Endothelial cell of umbilical vein (primary cell): ENCODE measurements at regions of chr2 and their contacts with region 1.

Region 1: GRCh38 chr2:100730346-100730745 is 89.6 kb upstream of the NPAS2 start:
- DNase-seq: peak; percentile 88
- H3K4me3 ChIP-seq: no peak overlapping the region
- H3K27ac ChIP-seq: no peak overlapping the region
- H3K4me1 ChIP-seq: no peaks in the 10 kb centered on the region
- H3K27me3 ChIP-seq: peaks cover 0 to 2% of the 10 kb centered on the region in 2 experiments
- CTCF ChIP-seq: peak; percentile 68 to 71
- POLR2A ChIP-seq: no peak

Region 2: GRCh38 chr2:100309973-100310719 is 420.2 kb before region 1 on chr2:
- CTCF ChIA-PET with region 1: no interaction called
- POLR2A ChIA-PET with region 1: no interaction called
- dilution Hi-C with region 1: no loop called
- intact Hi-C with region 1: no loop called
- DNase-seq: no peak
- H3K4me3 ChIP-seq: no peak overlapping the region
- H3K27ac ChIP-seq: no peak overlapping the region
- H3K4me1 ChIP-seq: no peaks in the 10 kb centered on the region
- H3K27me3 ChIP-seq: peaks cover 0 to 16% of the 10 kb centered on the region in 2 experiments
- CTCF ChIP-seq: no peak
- POLR2A ChIP-seq: no peak

Region 3: GRCh38 chr2:100610381-100610831 is 119.9 kb before region 1 on chr2:
- CTCF ChIA-PET with region 1: interaction called, 24 read pairs
- POLR2A ChIA-PET with region 1: no interaction called
- dilution Hi-C with region 1: no loop called
- intact Hi-C with region 1: loop called (anchors 1 kb)
- DNase-seq: peak; percentile 60
- H3K4me3 ChIP-seq: no peak overlapping the region
- H3K27ac ChIP-seq: no peak overlapping the region
- H3K4me1 ChIP-seq: no peaks in the 10 kb centered on the region
- H3K27me3 ChIP-seq: no peaks in the 10 kb centered on the region
- CTCF ChIP-seq: peak; percentile 64 to 88
- POLR2A ChIP-seq: no peak

Region 4: DNA sequence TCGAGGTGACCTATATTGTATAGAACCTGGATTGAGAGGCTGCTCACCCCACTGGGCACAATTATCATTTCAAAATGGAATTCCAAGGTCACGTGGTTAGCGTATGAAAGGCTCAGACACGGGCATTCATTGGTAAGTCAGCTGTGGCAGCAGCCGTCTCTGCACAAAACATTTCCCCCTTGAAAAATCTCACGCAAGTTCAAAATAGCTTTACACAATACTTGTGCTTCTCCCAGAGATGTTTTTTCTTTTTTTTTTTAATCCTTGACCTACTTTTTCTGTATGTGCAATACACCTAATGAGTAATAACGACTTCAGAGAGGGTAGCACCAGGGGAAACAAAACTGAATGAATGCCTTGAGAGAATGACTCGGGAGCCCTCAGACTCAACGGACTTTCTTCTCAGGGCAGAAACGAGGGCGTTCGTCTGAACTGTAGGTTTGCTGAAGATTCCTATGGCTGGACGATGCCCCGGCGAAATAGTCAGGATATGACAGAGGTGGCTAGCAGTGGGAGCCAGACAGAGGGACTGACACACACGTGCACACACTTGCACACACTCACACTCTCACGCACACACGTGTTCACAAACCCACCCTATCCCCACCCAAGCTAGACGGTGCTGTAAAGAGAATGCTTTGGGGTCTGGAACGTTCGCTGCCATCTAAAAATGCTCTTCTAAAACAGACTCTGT is 89.8 kb before region 1 on chr2:
- CTCF ChIA-PET with region 1: no interaction called
- POLR2A ChIA-PET with region 1: no interaction called
- dilution Hi-C with region 1: no loop called
- intact Hi-C with region 1: no loop called
- DNase-seq: no peak
- H3K4me3 ChIP-seq: no peak overlapping the region
- H3K27ac ChIP-seq: no peak overlapping the region
- H3K4me1 ChIP-seq: peaks cover 3% of the 10 kb centered on the region
- H3K27me3 ChIP-seq: peaks cover 14 to 17% of the 10 kb centered on the region in 2 experiments
- CTCF ChIP-seq: no peak
- POLR2A ChIP-seq: no peak

Region 5: GRCh38 chr2:100660851-100661584 is 69.3 kb before region 1 on chr2:
- CTCF ChIA-PET with region 1: no interaction called
- POLR2A ChIA-PET with region 1: no interaction called
- dilution Hi-C with region 1: no loop called
- intact Hi-C with region 1: no loop called
- DNase-seq: no peak
- H3K4me3 ChIP-seq: no peak overlapping the region
- H3K27ac ChIP-seq: no peak overlapping the region
- H3K4me1 ChIP-seq: no peaks in the 10 kb centered on the region
- H3K27me3 ChIP-seq: peaks cover 3 to 7% of the 10 kb centered on the region in 2 experiments
- CTCF ChIP-seq: no peak
- POLR2A ChIP-seq: no peak

Region 6: GRCh38 chr2:100767224-100767653 is 36.9 kb after region 1 on chr2:
- CTCF ChIA-PET with region 1: interaction called, 13 read pairs
- POLR2A ChIA-PET with region 1: no interaction called
- dilution Hi-C with region 1: no loop called
- intact Hi-C with region 1: no loop called
- DNase-seq: peak; percentile 86
- H3K4me3 ChIP-seq: no peak overlapping the region
- H3K27ac ChIP-seq: peak overlapping the region; percentile 63
- H3K4me1 ChIP-seq: peaks cover 25% of the 10 kb centered on the region
- H3K27me3 ChIP-seq: no peaks in the 10 kb centered on the region
- CTCF ChIP-seq: no peak
- POLR2A ChIP-seq: no peak

Region 7: DNA sequence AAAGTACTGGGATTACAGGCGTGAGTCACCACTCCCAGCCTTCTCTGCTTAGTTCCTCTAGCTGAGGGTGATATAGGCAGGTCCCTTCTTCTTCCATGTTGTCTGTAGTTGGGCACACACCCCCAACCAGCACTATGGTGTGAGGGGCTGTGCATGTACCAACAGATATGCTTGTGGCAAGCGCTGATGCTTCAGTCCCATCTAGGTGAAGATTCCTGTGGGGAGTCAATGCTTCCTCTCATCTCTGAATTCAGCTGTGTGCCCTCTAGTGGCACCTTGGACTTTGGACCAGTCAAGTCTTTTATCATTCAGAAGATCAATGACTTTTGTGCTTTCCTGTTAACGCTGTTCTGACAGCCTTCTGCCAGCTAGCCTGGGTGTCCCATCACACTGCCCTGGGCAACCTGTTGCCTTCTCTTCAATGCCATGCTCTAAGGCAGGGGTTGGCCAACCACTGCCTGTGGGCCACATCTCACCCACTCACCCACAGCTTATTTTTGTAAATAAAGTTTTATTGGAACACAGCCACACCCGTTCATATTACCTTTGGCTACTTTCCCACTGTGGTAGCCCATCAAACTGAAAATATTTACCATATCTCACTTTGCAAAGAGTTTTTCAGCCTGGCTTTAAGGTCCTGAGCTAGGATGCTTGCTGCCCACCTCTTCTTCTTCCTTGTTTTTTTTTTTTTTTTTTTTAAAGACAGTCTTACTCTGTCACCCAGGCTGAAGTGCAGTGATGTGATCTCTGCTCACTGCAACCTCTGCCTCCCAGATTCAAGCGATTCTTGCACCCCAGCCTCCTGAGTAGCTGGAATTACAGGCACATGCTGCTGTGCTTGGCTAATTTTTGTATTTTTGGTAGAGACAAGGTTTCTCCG is 140.5 kb after region 1 on chr2:
- CTCF ChIA-PET with region 1: interaction called, 11 read pairs
- POLR2A ChIA-PET with region 1: no interaction called
- dilution Hi-C with region 1: no loop called
- intact Hi-C with region 1: no loop called
- DNase-seq: no peak
- H3K4me3 ChIP-seq: no peak overlapping the region
- H3K27ac ChIP-seq: no peak overlapping the region
- H3K4me1 ChIP-seq: peaks cover 10% of the 10 kb centered on the region
- H3K27me3 ChIP-seq: no peaks in the 10 kb centered on the region
- CTCF ChIP-seq: peak; percentile 13 to 18
- POLR2A ChIP-seq: no peak

Region 8: DNA sequence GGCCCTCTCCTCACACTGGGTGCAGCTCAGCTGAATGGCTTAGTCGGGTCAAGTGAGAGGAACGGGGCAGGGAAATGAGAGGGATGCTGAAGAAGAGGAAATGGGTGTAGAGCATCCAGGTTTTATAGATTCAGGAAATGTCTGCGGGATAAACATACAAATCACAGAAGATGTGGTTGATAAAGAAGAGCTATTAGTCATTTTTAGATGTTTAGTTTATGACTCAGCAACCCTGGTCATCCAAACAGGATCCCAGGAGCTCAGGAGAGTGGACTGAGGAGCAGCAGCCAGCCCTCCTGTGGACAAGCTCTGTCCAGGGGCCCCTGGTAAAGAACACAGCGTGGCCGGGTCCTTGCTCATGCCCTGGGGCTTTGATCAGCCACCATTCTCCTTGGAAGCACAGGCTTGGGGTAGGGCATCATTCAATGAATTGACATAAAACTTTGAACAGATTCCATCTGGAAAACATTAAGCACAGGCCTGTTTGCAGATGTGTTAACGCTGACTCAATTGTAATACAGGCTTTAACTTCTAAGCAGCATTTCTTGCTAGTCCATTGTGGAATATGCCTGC is 172.6 kb after region 1 on chr2:
- CTCF ChIA-PET with region 1: interaction called, 18 read pairs
- POLR2A ChIA-PET with region 1: no interaction called
- dilution Hi-C with region 1: no loop called
- intact Hi-C with region 1: loop called (anchors 1 kb)
- DNase-seq: peak; percentile 94
- H3K4me3 ChIP-seq: no peak overlapping the region
- H3K27ac ChIP-seq: peak overlapping the region; percentile 79
- H3K4me1 ChIP-seq: peaks cover 62% of the 10 kb centered on the region
- H3K27me3 ChIP-seq: no peaks in the 10 kb centered on the region
- CTCF ChIP-seq: peak in 1 of 2 donors; percentile 24
- POLR2A ChIP-seq: peak; percentile 78

Region 9: DNA sequence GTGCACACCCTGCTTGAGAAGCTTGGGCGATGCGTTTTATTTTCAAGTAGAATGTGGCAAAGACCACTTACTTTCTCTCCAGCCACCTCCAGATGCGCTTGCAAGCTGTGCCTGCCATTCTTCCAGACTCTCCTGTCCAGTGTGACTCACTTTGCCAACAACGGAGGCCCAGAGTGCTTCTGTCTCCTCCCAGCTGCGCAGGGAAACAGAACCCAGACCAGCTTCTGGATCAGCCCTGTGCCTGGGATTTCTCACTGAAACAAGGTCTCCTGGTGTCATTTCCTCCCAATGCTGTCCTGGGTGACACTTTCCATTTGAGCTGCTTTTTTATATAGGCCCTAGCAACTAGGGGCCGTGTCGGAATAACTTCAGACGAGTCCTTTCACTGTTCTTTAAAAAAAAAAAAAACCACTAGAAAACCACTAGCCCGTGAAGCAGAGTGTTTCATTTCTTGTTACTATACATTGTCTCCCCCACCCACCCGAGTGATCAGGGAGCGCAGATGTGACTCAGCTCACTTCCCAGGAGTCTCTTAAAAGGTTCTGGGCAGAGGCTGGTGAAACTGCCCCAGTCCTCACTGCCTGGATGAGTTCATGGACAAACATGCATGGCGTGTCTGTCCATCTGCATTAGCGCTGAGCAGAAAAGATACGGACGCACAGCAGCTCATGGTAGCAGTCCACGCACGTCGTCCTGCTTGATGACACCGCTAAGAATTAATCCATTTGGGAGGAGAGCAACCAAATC is 246.5 kb after region 1 on chr2:
- CTCF ChIA-PET with region 1: interaction called, 22 read pairs
- POLR2A ChIA-PET with region 1: no interaction called
- dilution Hi-C with region 1: no loop called
- intact Hi-C with region 1: no loop called
- DNase-seq: no peak
- H3K4me3 ChIP-seq: no peak overlapping the region
- H3K27ac ChIP-seq: no peak overlapping the region
- H3K4me1 ChIP-seq: peaks cover 11% of the 10 kb centered on the region
- H3K27me3 ChIP-seq: no peaks in the 10 kb centered on the region
- CTCF ChIP-seq: no peak
- POLR2A ChIP-seq: no peak

Region 10: GRCh38 chr2:101001691-101002561 is 271.6 kb after region 1 on chr2 and contains the start of gene RPL31:
- CTCF ChIA-PET with region 1: interaction called, 15 read pairs
- POLR2A ChIA-PET with region 1: no interaction called
- dilution Hi-C with region 1: no loop called
- intact Hi-C with region 1: loop called (anchors 1 kb)
- DNase-seq: peak; percentile 95
- H3K4me3 ChIP-seq: peak within 1 kb of the TSS; percentile 82 to 94 (median 90)
- H3K27ac ChIP-seq: peak within 1 kb of the TSS; percentile 76
- H3K4me1 ChIP-seq: peaks cover 24% of the 10 kb centered on the region
- H3K27me3 ChIP-seq: no peaks in the 10 kb centered on the region
- CTCF ChIP-seq: no peak
- POLR2A ChIP-seq: peak; percentile 99
- total RNA-seq, gene RPL31: 1,337 and 1,355 TPM in 2 replicates